ENCODE measurements at regions of chr16 and their contacts with region 1.

Region 1: GRCh38 chr16:2883027-2883851 is at the start of gene FLYWCH2:
- DNase-seq: peak; percentile 100
- H3K4me3 Mint-ChIP-seq: peak within 1 kb of the TSS; percentile 94
- H3K27ac Mint-ChIP-seq: peak within 1 kb of the TSS; percentile 95
- H3K4me1 Mint-ChIP-seq: peaks cover 11% of the 10 kb centered on the region
- H3K27me3 Mint-ChIP-seq: no peaks in the 10 kb centered on the region
- total RNA-seq, gene FLYWCH2: 21.2 and 22.2 TPM in 2 replicates

Region 2: DNA sequence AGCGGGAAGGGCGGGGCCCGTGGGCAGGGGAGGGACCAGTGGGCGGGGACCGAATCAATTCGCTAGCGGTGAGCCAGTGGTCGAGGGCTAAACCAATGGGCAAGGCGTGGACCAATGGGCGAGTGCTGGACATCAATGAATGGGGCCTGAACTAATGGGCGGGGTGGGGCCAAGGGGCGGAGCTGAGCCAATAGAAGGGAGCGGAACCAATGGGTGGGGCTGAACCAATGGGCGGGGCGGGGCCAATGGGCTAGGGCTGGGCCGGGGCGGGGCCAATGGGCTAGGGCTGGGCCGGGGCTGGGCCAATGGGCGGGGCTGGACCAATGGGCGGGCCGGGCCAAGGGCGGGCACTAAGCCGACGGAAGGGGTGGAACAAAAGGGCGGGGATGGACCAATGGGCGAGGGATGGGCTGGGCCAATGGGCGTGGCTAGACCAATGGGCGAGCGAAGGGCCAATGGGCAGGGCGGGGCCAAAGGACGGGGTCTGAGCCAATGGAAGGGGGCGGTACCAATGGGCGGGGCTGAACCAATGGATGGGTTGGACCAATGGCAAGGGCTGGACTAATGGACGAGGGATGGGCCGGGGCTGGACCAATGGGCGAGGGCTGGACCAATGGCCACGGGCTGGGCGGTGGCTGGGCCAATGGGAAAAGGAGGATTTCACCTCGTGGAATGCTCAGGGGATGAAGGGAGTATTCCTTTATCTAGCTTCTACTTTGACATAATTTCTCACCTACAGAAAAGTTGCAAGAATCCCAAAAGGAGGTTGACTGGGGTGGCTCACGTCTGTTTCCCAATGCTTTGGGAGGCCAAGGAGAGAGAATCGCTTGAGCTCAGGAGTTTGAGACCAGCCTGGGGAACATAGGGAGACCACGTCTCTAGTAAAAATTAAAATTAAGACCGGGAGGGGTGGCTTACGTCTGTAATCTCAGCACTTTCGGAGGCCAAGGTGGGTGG is 22.5 kb after region 1 on chr16:
- intact Hi-C with region 1: loop called (anchors 1 kb)
- DNase-seq: peak; percentile 99
- H3K4me3 Mint-ChIP-seq: peak overlapping the region; percentile 98
- H3K27ac Mint-ChIP-seq: peak overlapping the region; percentile 92
- H3K4me1 Mint-ChIP-seq: peaks cover 17% of the 10 kb centered on the region
- H3K27me3 Mint-ChIP-seq: peaks cover 2% of the 10 kb centered on the region

Region 3: DNA sequence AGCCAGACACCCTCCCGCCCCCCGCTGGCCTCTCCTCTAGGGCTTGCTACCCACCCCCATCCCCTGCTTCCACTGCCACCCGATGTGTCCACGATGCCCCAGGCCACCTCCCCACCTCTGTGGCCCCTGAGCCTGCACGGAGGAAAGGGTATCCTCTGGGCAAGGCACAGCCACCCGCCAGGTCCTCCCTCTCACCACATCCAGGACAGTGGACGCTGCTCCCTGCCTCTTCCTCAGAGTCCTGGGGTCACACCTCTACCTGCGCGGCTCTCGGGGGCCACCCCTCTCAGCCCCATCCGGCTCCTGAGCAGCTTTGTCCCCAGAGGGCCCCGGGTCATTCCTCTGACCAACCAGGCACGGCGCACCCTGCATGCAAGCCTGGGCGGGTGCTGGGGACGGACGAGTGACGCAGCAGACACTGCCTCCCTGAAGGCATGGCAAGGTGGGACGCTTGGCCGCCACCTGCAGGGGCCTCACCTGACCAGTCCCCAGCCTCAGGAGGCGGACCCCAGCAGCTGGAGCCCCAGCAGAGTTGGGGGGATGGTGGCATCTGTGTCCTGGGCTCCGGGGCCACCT is 53.3 kb after region 1 on chr16:
- intact Hi-C with region 1: no loop called
- DNase-seq: no peak
- H3K4me3 Mint-ChIP-seq: no peak overlapping the region
- H3K27ac Mint-ChIP-seq: no peak overlapping the region
- H3K4me1 Mint-ChIP-seq: peaks cover 4% of the 10 kb centered on the region
- H3K27me3 Mint-ChIP-seq: no peaks in the 10 kb centered on the region

Region 4: GRCh38 chr16:2964475-2965336 is 81.5 kb after region 1 on chr16:
- intact Hi-C with region 1: loop called (anchors 5 kb)
- DNase-seq: peak; percentile 92
- H3K4me3 Mint-ChIP-seq: peak overlapping the region; percentile 83
- H3K27ac Mint-ChIP-seq: no peak overlapping the region
- H3K4me1 Mint-ChIP-seq: peaks cover 17% of the 10 kb centered on the region
- H3K27me3 Mint-ChIP-seq: peaks cover 31% of the 10 kb centered on the region

Measured in activated CD4-positive, alpha-beta T cell treated with anti-CD3 and anti-CD28 coated beads, Interleukin-2, amount 10 ng/mL, durations not matched to agents 24 days and 14 days (primary cell).